Left ventricle myocardium superior (tissue), 1 donor: ENCODE measurements at regions of chr17 and their contacts with region 1.

Region 1: GRCh38 chr17:48878918-48879898 is 13.4 kb upstream of the ATP5MC1 start:
- DNase-seq: no peak
- ATAC-seq: peak; percentile 84

Region 2: DNA sequence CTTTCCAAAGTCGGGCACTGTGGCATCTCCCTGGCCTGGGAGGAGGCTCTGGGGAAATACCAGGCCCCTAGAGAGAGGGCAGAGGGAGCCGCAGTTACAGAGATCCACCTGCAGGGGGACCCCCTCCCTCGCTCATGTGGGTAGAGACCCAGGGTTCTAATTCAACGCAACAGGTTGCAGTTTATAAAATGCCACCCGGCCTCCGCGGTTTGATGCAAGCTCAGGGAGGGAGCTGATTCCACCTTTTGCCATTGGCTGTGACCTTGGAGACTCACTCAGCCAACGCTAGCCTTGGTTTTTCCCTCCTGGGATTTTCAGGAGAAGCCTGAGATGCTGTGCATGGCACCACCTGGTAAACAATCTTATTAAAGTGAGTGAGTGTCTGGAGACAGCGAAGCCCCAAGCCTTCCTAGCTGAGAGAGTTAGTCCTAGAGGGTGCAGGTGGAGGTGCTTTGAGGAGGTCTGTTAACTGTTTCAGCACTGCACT is 74.2 kb before region 1 on chr17:
- intact Hi-C with region 1: loop called (anchors 2 kb)
- DNase-seq: peak; percentile 66
- ATAC-seq: peak; percentile 85

Region 3: GRCh38 chr17:48970224-48970623 is 91.0 kb after region 1 on chr17:
- intact Hi-C with region 1: no loop called
- DNase-seq: no peak
- ATAC-seq: no peak